HCT116 (cell line): ENCODE measurements at regions of chr3 and their contacts with region 1.

Region 1: GRCh38 chr3:12830785-12831156 is 10.6 kb downstream of the RPL32 start:
- DNase-seq: no peak
- ATAC-seq: peak; percentile 28
- H3K4me3 ChIP-seq: no peak overlapping the region
- H3K27ac ChIP-seq: peak overlapping the region; percentile 25; the same call in 1 of the 2 replicates
- H3K4me1 ChIP-seq: peaks cover 0 to 20% of the 10 kb centered on the region in 2 experiments; a peak in 1 of 4 replicates
- H3K27me3 ChIP-seq: no peaks in the 10 kb centered on the region
- CTCF ChIP-seq: peak in 2 of 3 experiments; percentile 19 to 44; a peak in 3 of 6 replicates
- POLR2A ChIP-seq: no peak
- RAD21 ChIP-seq: no peak

Region 2: DNA sequence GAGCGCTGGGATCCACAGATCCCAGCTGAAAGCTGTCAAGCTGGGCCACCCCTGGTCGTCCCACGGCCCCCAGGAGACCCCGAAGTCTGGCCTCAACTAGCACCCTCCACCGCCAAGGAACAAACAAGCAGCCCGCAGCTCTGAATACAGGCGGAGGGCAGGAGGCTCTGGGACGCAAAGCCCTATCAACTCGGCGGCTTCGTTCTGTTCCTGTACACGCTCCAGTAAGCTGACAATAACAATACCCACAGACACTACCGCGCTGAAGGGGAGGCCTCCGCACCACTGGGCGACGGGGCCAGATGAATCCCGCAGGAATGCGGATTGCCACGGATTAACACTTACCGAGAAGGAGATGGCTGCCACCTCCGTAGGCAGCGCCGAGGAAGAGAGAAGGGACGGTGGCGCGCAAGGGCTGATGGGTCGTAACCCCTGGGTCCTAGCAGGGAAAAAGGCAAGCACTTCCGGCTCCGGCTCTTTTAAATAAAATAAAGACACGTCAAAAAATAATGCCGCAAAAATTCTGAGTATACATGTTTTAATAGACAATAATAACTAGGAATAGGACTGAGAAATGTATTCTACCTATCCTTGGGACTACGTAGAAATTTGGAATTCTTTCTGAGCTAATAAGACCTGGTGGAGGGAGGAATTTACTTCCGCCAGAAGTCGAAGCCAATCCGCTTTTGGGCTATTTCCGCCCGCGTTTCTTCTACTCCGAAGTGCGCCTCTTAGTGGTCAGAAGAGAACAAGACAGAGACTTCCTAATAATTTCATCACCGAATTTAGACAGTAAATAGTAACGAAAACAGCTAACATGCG is 10.6 kb after region 1 on chr3 and contains the start of gene RPL32:
- CTCF ChIA-PET with region 1: interaction called, 4 read pairs
- POLR2A ChIA-PET with region 1: interaction called, 13 read pairs
- RAD21 ChIA-PET with region 1: no interaction called
- intact Hi-C with region 1: no loop called
- DNase-seq: peak; percentile 94
- ATAC-seq: peak; percentile 82
- H3K4me3 ChIP-seq: peak within 1 kb of the TSS; percentile 95 to 100
- H3K27ac ChIP-seq: peak within 1 kb of the TSS; percentile 93
- H3K4me1 ChIP-seq: peaks cover 0 to 18% of the 10 kb centered on the region in 2 experiments; a peak in 2 of 4 replicates
- H3K27me3 ChIP-seq: no peaks in the 10 kb centered on the region
- CTCF ChIP-seq: peak; percentile 79 to 87 (median 80)
- POLR2A ChIP-seq: peak; percentile 95
- RAD21 ChIP-seq: peak; percentile 51; the same call in 1 of the 2 replicates
- total RNA-seq, gene RPL32: 1,853 TPM